Transverse colon (tissue), 4 donors: ENCODE measurements at regions of chrX and their contacts with region 1.

Region 1: GRCh38 chrX:79630033-79631009 is 263.2 kb upstream of the ITM2A start:
- DNase-seq: no peak
- H3K4me3 ChIP-seq: no peak overlapping the region
- H3K27ac ChIP-seq: peak overlapping the region in 1 of 4 donors; percentile 11
- H3K4me1 ChIP-seq: no peaks in the 10 kb centered on the region
- H3K27me3 ChIP-seq: no peaks in the 10 kb centered on the region
- CTCF ChIP-seq: no peak
- EP300 ChIP-seq: no peak
- POLR2A ChIP-seq: no peak

Region 2: DNA sequence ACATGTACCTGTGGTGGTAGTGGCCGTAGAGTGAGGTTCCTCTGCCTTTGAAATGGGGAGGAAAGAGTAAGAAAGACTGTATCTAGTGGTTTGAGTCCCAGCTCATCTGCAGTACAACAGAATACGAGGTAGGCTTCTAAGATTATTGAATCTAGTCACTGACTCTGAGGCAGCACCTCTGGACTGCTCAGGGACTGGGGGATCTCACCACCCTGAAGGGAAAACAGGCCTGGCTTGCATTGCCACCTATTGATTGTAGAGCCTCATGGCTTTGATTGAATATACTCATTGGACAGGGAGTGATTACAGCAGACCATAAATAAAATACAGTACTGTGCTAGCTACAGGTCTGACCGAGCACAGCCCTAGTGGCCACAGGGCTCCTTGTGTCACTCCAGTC is 435.3 kb before region 1 on chrX:
- in situ Hi-C with region 1: no loop called
- intact Hi-C with region 1: no loop called
- DNase-seq: no peak
- H3K4me3 ChIP-seq: no peak overlapping the region
- H3K27ac ChIP-seq: no peak overlapping the region
- H3K4me1 ChIP-seq: no peaks in the 10 kb centered on the region
- H3K27me3 ChIP-seq: no peaks in the 10 kb centered on the region
- CTCF ChIP-seq: no peak
- EP300 ChIP-seq: no peak
- POLR2A ChIP-seq: no peak

Region 3: GRCh38 chrX:79300821-79301220 is 329.5 kb before region 1 on chrX:
- in situ Hi-C with region 1: no loop called
- intact Hi-C with region 1: no loop called
- DNase-seq: no peak
- H3K4me3 ChIP-seq: no peak overlapping the region
- H3K27ac ChIP-seq: no peak overlapping the region
- H3K4me1 ChIP-seq: no peaks in the 10 kb centered on the region
- H3K27me3 ChIP-seq: no peaks in the 10 kb centered on the region
- CTCF ChIP-seq: no peak
- EP300 ChIP-seq: no peak
- POLR2A ChIP-seq: no peak

Region 4: DNA sequence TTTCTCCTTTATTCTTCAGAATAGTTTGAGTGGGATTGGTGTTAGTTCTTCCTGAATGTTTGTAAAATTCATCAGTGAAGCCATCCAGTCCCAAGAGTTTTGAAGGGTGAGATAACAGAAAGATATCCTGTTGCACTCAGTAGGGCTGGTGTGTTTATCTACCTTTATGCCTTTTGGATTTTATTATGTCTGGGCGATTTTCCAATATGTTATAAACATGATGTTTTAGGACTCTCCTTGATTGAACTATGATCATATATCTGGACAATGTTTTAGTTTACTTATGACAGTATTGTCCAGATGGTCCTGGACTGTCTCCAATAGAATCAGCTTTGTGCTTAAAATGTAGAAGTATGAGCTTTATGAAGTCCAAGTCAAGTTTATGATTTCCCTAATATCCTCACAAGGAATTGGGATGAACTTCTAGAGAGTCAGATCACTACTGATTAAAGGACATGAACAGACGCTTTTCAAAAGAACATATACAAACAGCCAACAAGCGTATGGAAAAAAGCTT is 185.6 kb before region 1 on chrX:
- in situ Hi-C with region 1: no loop called
- intact Hi-C with region 1: no loop called
- DNase-seq: no peak
- H3K4me3 ChIP-seq: no peak overlapping the region
- H3K27ac ChIP-seq: no peak overlapping the region
- H3K4me1 ChIP-seq: no peaks in the 10 kb centered on the region
- H3K27me3 ChIP-seq: no peaks in the 10 kb centered on the region
- CTCF ChIP-seq: no peak
- EP300 ChIP-seq: no peak
- POLR2A ChIP-seq: no peak

Region 5: GRCh38 chrX:79645749-79646148 is 15.4 kb after region 1 on chrX:
- in situ Hi-C with region 1: no loop called
- intact Hi-C with region 1: no loop called
- DNase-seq: no peak
- H3K4me3 ChIP-seq: no peak overlapping the region
- H3K27ac ChIP-seq: no peak overlapping the region
- H3K4me1 ChIP-seq: no peaks in the 10 kb centered on the region
- H3K27me3 ChIP-seq: no peaks in the 10 kb centered on the region
- CTCF ChIP-seq: no peak
- EP300 ChIP-seq: no peak
- POLR2A ChIP-seq: no peak

Region 6: DNA sequence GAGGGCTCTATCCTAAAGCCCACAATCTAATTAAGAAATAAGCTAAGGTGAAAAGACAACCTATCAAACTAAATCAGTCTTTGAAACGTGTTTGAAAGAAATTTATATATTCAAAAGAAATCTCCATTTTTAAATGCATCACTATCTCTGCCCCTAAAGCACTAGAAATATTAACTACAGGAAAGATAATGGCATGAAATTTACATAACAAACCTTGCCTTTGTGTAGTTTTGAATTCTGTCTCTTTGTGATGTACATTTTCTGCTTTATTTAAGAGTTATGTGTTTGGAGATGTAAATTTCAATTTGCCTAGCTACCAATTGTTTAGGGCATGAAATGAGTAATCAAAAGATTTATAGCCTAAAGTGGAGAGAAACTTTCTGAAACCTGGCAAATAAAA is 98.1 kb after region 1 on chrX:
- in situ Hi-C with region 1: loop called in 1 of 4 experiments (anchors 25 kb)
- intact Hi-C with region 1: no loop called
- DNase-seq: no peak
- H3K4me3 ChIP-seq: no peak overlapping the region
- H3K27ac ChIP-seq: no peak overlapping the region
- H3K4me1 ChIP-seq: no peaks in the 10 kb centered on the region
- H3K27me3 ChIP-seq: no peaks in the 10 kb centered on the region
- CTCF ChIP-seq: no peak
- EP300 ChIP-seq: no peak
- POLR2A ChIP-seq: no peak